MCF 10A (cell line): ENCODE measurements at regions of chr11 and their contacts with region 1.

Region 1: GRCh38 chr11:12235947-12236743 is 125.8 kb downstream of the MICAL2 start:
- DNase-seq: peak; percentile 73
- H3K4me3 Mint-ChIP-seq: no peak overlapping the region
- H3K27ac Mint-ChIP-seq: peak overlapping the region; percentile 55
- H3K4me1 Mint-ChIP-seq: peaks cover 16% of the 10 kb centered on the region
- H3K27me3 Mint-ChIP-seq: no peaks in the 10 kb centered on the region
- CTCF ChIP-seq: peak; percentile 72

Region 2: GRCh38 chr11:12052676-12053605 is 183.2 kb before region 1 on chr11:
- CTCF ChIA-PET with region 1: interaction called, 71 read pairs
- POLR2A ChIA-PET with region 1: interaction called, 4 read pairs
- intact Hi-C with region 1: loop called (anchors 1 kb)
- DNase-seq: peak; percentile 60
- H3K4me3 Mint-ChIP-seq: no peak overlapping the region
- H3K27ac Mint-ChIP-seq: peak overlapping the region; percentile 10
- H3K4me1 Mint-ChIP-seq: peaks cover 30% of the 10 kb centered on the region
- H3K27me3 Mint-ChIP-seq: no peaks in the 10 kb centered on the region
- CTCF ChIP-seq: no peak

Region 3: DNA sequence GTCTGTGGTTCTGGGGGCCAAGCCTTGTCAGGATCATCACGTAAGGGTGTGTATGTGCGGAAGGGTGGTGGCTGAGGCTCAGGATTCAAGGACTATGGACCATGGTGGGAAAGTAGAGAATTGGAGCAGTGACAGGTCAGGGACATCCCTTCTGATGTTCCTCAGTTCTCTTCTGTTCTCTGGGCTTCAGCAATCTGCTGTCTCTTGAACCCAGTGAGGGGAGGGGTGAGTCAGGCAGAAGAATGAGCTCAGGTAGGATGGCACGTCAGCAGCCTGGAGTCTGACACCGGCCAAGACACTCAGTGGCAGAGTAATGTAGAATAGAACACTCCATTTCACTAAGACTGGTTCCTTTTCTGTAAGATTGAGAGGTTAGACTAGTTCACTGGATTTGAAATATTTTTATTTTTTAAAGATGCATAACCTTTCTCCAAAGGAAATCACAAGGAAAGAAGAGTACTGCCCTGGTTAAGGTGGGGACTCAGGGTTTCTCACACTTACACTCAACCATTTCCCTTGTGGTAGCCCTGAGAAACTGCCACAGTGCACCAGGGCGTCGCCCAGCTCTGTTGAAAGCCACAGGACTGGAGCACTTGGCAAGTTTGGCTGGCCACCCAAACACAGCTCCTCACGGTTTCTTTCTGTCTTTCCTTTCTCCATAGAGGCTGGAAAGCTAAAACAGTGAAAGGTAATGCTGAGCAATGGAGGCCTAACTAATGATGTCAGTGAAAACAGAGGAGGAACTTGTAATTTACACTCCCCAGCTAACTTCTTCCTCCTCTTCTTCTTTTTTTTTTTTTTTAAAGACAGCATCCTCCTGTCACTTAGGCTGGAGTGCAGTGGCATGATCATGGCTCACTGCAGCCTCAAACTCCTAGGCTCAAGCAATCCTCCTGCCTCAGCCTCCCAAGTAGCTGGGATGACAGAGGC is 148.8 kb before region 1 on chr11:
- CTCF ChIA-PET with region 1: interaction called, 83 read pairs
- POLR2A ChIA-PET with region 1: interaction called, 4 read pairs
- intact Hi-C with region 1: loop called (anchors 1 kb)
- DNase-seq: peak; percentile 70
- H3K4me3 Mint-ChIP-seq: peak overlapping the region; percentile 8
- H3K27ac Mint-ChIP-seq: peak overlapping the region; percentile 37
- H3K4me1 Mint-ChIP-seq: peaks cover 45% of the 10 kb centered on the region
- H3K27me3 Mint-ChIP-seq: no peaks in the 10 kb centered on the region
- CTCF ChIP-seq: peak; percentile 11

Region 4: DNA sequence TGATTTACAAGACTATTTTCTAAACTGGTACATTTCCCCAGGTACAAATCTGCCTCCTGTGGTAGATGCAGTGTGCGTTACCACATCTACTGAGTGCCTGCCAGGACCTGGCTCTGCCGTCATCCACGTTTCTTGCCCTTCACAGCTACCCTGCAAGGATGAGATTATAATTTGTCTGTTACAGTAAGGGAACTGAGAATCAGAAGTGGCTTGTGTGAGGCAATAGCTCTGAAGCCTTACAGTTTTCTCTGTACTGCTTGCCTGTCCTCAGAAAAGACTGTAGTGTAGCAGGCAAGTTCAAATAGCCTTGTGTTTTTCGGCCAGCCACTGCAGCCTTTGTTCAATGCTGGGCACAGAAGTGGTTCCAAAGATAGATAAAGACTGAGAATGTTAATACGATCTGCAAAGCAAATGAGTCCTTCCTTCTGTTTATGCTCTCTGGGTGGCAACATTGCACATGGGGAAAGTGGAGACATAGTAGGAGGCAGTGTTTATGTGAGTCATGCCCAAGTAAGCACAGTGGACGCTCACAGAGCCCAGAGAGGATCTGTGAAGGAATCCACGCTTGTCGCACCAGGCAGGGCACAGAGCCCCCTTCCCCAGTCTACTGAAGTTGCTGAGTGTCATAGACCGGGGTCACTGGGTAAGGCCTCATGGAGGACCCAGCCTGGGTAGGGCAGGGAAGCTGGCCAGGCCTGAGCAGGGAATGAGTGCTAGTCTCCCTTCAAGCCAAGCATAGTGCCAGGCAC is 76.6 kb before region 1 on chr11:
- CTCF ChIA-PET with region 1: interaction called, 34 read pairs
- POLR2A ChIA-PET with region 1: no interaction called
- intact Hi-C with region 1: loop called (anchors 1 kb)
- DNase-seq: peak; percentile 81
- H3K4me3 Mint-ChIP-seq: no peak overlapping the region
- H3K27ac Mint-ChIP-seq: peak overlapping the region; percentile 85
- H3K4me1 Mint-ChIP-seq: peaks cover 30% of the 10 kb centered on the region
- H3K27me3 Mint-ChIP-seq: no peaks in the 10 kb centered on the region
- CTCF ChIP-seq: no peak

Region 5: GRCh38 chr11:12215181-12215593 is 21.0 kb before region 1 on chr11:
- CTCF ChIA-PET with region 1: interaction called, 10 read pairs
- POLR2A ChIA-PET with region 1: no interaction called
- intact Hi-C with region 1: no loop called
- DNase-seq: no peak
- H3K4me3 Mint-ChIP-seq: no peak overlapping the region
- H3K27ac Mint-ChIP-seq: peak overlapping the region; percentile 33
- H3K4me1 Mint-ChIP-seq: peaks cover 29% of the 10 kb centered on the region
- H3K27me3 Mint-ChIP-seq: no peaks in the 10 kb centered on the region
- CTCF ChIP-seq: no peak

Region 6: GRCh38 chr11:12303421-12304149 is 67.4 kb after region 1 on chr11:
- CTCF ChIA-PET with region 1: no interaction called
- POLR2A ChIA-PET with region 1: no interaction called
- intact Hi-C with region 1: no loop called
- DNase-seq: no peak
- H3K4me3 Mint-ChIP-seq: no peak overlapping the region
- H3K27ac Mint-ChIP-seq: no peak overlapping the region
- H3K4me1 Mint-ChIP-seq: no peaks in the 10 kb centered on the region
- H3K27me3 Mint-ChIP-seq: no peaks in the 10 kb centered on the region
- CTCF ChIP-seq: no peak